ENCODE measurements at regions of chr1 and their contacts with region 1.

Region 1: GRCh38 chr1:117895482-117896114 is 33.8 kb downstream of the GDAP2 start:
- DNase-seq: no peak
- ATAC-seq: no peak

Region 2: GRCh38 chr1:117534995-117535467 is 360.6 kb before region 1 on chr1:
- intact Hi-C with region 1: loop called (anchors 10 kb)
- DNase-seq: no peak
- ATAC-seq: peak; percentile 95

Region 3: GRCh38 chr1:117929173-117929989 is 33.8 kb after region 1 on chr1 and contains the starts of genes GDAP2 and WDR3:
- intact Hi-C with region 1: no loop called
- DNase-seq: peak; percentile 96
- ATAC-seq: peak; percentile 99
- total RNA-seq, gene GDAP2: 13.7 TPM
- total RNA-seq, gene WDR3: 12.0 TPM